A673 (cell line): ENCODE measurements at regions of chr11 and their contacts with region 1.

Region 1: GRCh38 chr11:118163494-118163893 is 10.9 kb upstream of the SCN4B start:
- DNase-seq: no peak
- H3K4me3 ChIP-seq: no peak overlapping the region
- H3K27ac ChIP-seq: no peak overlapping the region
- H3K4me1 ChIP-seq: no peaks in the 10 kb centered on the region
- H3K27me3 ChIP-seq: peaks cover 13% of the 10 kb centered on the region
- CTCF ChIP-seq: no peak

Region 2: GRCh38 chr11:118139578-118139977 is 23.9 kb before region 1 on chr11:
- CTCF ChIA-PET with region 1: interaction called, 6 read pairs
- POLR2A ChIA-PET with region 1: interaction called, 20 read pairs
- intact Hi-C with region 1: no loop called
- DNase-seq: no peak
- H3K4me3 ChIP-seq: no peak overlapping the region
- H3K27ac ChIP-seq: no peak overlapping the region
- H3K4me1 ChIP-seq: no peaks in the 10 kb centered on the region
- H3K27me3 ChIP-seq: no peaks in the 10 kb centered on the region
- CTCF ChIP-seq: no peak

Region 3: GRCh38 chr11:118180300-118180703 is 16.8 kb after region 1 on chr11:
- CTCF ChIA-PET with region 1: no interaction called
- POLR2A ChIA-PET with region 1: no interaction called
- intact Hi-C with region 1: no loop called
- DNase-seq: peak; percentile 59
- H3K4me3 ChIP-seq: no peak overlapping the region
- H3K27ac ChIP-seq: no peak overlapping the region
- H3K4me1 ChIP-seq: no peaks in the 10 kb centered on the region
- H3K27me3 ChIP-seq: peaks cover 1% of the 10 kb centered on the region
- CTCF ChIP-seq: no peak